Activated CD4-positive, alpha-beta T cell treated with anti-CD3 and anti-CD28 coated beads, Interleukin-2, amount 10 ng/mL, durations not matched to agents 24 days and 14 days (primary cell): ENCODE measurements at regions of chr6 and their contacts with region 1.

Region 1: DNA sequence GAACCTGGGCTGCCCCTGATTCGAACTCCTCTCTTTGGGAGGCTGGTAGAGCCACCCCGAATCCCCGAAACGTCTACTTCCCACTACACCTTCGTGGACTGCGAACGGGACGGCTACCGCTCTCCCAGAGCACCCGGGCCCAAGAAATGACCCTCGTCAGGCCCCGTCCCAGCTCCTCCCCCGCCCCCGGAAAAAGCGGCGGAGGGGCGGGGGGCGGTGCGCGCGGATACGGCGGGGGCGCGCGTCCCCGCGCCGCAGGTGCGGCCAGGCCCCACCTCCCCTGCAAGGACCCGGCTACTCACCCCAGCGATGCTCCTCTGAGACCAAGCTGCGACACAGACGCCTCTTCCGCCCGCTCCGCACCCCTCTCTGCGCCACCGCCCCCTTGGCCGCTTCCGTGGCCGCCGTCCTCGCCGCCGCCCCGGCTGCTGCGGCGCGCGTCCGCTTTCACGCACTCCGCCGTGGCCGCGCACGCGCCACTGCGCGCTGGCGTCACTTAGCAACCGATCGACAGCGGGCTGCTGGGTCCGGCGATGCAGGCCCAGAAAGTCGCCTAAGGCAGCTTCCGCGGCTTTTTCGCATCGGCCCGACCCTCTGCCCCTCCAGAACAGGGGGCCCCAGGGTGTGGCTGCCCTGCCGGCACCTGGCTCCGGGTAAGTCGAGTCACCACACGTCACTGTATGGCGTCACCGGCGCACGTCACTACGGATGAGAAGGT is at the start of gene BTBD9:
- DNase-seq: peak; percentile 96
- H3K4me3 Mint-ChIP-seq: peak within 1 kb of the TSS; percentile 90
- H3K27ac Mint-ChIP-seq: peak within 1 kb of the TSS; percentile 88
- H3K4me1 Mint-ChIP-seq: peaks cover 38% of the 10 kb centered on the region
- H3K27me3 Mint-ChIP-seq: no peaks in the 10 kb centered on the region
- total RNA-seq, gene BTBD9: 12.3 and 12.4 TPM in 2 replicates

Region 2: GRCh38 chr6:38570750-38571149 is 68.9 kb before region 1 on chr6:
- intact Hi-C with region 1: loop called (anchors 1 kb)
- DNase-seq: no peak
- H3K4me3 Mint-ChIP-seq: no peak overlapping the region
- H3K27ac Mint-ChIP-seq: no peak overlapping the region
- H3K4me1 Mint-ChIP-seq: peaks cover 24% of the 10 kb centered on the region
- H3K27me3 Mint-ChIP-seq: no peaks in the 10 kb centered on the region

Region 3: DNA sequence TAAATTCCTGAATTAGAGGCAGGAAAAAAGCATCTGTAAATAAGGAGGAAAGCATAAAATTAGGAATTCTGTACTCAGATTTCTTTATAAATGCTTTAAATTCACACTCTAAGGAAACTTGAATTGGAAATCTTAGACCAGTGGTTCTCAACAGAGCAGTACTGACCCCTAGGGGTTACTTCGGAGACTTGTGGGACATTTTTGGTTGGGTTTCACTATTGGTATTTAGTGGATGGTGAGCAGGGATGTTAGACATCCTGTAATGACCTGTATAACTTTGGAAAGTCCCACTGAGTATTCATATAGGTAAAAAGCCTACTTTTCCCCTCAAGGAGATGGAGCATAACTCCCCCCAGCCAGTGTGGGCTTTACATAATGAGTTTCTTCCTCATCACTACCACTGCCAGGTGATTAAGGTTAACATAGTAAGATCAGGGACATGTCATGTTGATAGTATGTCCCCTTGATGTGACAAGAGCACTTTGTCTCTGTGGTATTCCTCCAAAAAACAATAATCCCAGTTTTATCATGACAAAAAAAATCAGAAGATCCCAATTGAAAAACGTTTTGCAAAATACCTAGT is 32.3 kb after region 1 on chr6:
- intact Hi-C with region 1: loop called (anchors 5 kb)
- DNase-seq: peak; percentile 81
- H3K4me3 Mint-ChIP-seq: no peak overlapping the region
- H3K27ac Mint-ChIP-seq: no peak overlapping the region
- H3K4me1 Mint-ChIP-seq: peaks cover 27% of the 10 kb centered on the region
- H3K27me3 Mint-ChIP-seq: no peaks in the 10 kb centered on the region

Region 4: GRCh38 chr6:38702558-38703397 is 63.1 kb after region 1 on chr6 and contains the start of gene GLO1:
- intact Hi-C with region 1: loop called (anchors 1 kb)
- DNase-seq: peak; percentile 99
- H3K4me3 Mint-ChIP-seq: peak within 1 kb of the TSS; percentile 96
- H3K27ac Mint-ChIP-seq: peak within 1 kb of the TSS; percentile 93
- H3K4me1 Mint-ChIP-seq: peaks cover 40% of the 10 kb centered on the region
- H3K27me3 Mint-ChIP-seq: peaks cover 7% of the 10 kb centered on the region
- total RNA-seq, gene GLO1: 124 and 127 TPM in 2 replicates

Region 5: GRCh38 chr6:38713812-38714211 is 74.2 kb after region 1 on chr6:
- intact Hi-C with region 1: loop called (anchors 1 kb)
- DNase-seq: peak; percentile 92
- H3K4me3 Mint-ChIP-seq: peak overlapping the region; percentile 70
- H3K27ac Mint-ChIP-seq: peak overlapping the region; percentile 91
- H3K4me1 Mint-ChIP-seq: peaks cover 32% of the 10 kb centered on the region
- H3K27me3 Mint-ChIP-seq: peaks cover 13% of the 10 kb centered on the region

Region 6: GRCh38 chr6:39466631-39467030 is 827.0 kb after region 1 on chr6:
- intact Hi-C with region 1: no loop called
- DNase-seq: no peak
- H3K4me3 Mint-ChIP-seq: no peak overlapping the region
- H3K27ac Mint-ChIP-seq: no peak overlapping the region
- H3K4me1 Mint-ChIP-seq: no peaks in the 10 kb centered on the region
- H3K27me3 Mint-ChIP-seq: peaks cover 7% of the 10 kb centered on the region